Activated CD8-positive, alpha-beta memory T cell treated with anti-CD3 and anti-CD28 coated beads, Interleukin-2, amount 10 ng/mL, durations not matched to agents 7 days and 5 days (primary cell): ENCODE measurements at regions of chr11 and their contacts with region 1.

Region 1: DNA sequence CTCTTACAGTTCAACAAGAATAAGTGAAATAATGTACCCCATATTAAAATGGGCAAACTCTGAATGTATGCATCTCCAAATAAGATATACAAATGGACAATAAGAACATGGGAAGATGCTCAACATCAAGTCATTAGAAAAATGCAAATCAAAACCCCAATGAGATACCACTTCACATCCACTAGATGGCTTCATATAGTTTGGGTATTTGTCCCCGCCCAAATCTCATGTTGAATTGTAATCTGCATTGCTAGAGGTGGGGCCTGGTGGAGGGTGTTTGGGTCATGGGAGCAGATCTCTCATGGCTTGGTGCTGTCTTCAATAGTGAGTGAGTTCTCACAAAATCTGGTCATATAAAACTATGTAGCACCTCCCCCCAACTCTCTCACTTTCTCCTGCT is 5.7 kb downstream of the MPZL2 start:
- DNase-seq: no peak
- ATAC-seq: no peak
- H3K4me3 Mint-ChIP-seq: no peak overlapping the region
- H3K27ac Mint-ChIP-seq: no peak overlapping the region
- H3K4me1 Mint-ChIP-seq: peaks cover 38% of the 10 kb centered on the region
- H3K27me3 Mint-ChIP-seq: no peaks in the 10 kb centered on the region

Region 2: GRCh38 chr11:118283756-118284350 is 25.4 kb after region 1 on chr11:
- CTCF ChIA-PET with region 1: interaction called, 12 read pairs
- DNase-seq: no peak
- ATAC-seq: peak; percentile 23
- H3K4me3 Mint-ChIP-seq: no peak overlapping the region
- H3K27ac Mint-ChIP-seq: peak overlapping the region; percentile 30
- H3K4me1 Mint-ChIP-seq: peaks cover 23% of the 10 kb centered on the region
- H3K27me3 Mint-ChIP-seq: no peaks in the 10 kb centered on the region

Region 3: GRCh38 chr11:118318581-118319336 is 60.3 kb after region 1 on chr11:
- CTCF ChIA-PET with region 1: no interaction called
- DNase-seq: no peak
- ATAC-seq: no peak
- H3K4me3 Mint-ChIP-seq: no peak overlapping the region
- H3K27ac Mint-ChIP-seq: no peak overlapping the region
- H3K4me1 Mint-ChIP-seq: peaks cover 69% of the 10 kb centered on the region
- H3K27me3 Mint-ChIP-seq: no peaks in the 10 kb centered on the region